GM12878 (cell line): ENCODE measurements at regions of chr13 and their contacts with region 1.

Region 1: DNA sequence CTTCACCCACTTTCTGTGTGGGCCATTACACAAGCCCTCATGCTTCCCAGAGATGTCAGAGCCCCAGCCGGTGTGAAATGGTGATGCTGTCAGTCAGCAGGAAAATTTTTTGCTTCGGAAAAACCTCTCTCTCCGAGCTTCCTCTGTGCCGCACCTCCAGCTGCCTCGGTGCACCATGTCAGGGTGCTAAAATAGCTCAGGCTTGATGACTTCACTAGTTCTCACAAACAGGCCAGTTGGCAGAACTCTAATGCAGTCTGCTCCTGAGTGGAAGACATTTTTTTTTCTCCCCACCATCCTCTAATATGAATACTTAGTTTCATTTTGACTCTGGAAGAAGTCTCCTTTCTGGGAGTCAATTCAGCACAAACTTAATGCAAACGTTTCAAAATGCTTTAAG is 71.3 kb downstream of the KLF12 start:
- DNase-seq: peak; percentile 52
- ATAC-seq: peak; percentile 90
- H3K4me3 ChIP-seq: peak overlapping the region; percentile 59
- H3K27ac ChIP-seq: peak overlapping the region; percentile 75
- H3K4me1 ChIP-seq: peaks cover 27% of the 10 kb centered on the region
- H3K27me3 ChIP-seq: no peaks in the 10 kb centered on the region
- CTCF ChIP-seq: no peak
- EP300 ChIP-seq: no peak
- POLR2A ChIP-seq: no peak
- RAD21 ChIP-seq: peak; percentile 13; the same call in 1 of the 2 replicates

Region 2: GRCh38 chr13:74040200-74040599 is 22.7 kb before region 1 on chr13:
- CTCF ChIA-PET with region 1: interaction called, 4 read pairs
- POLR2A ChIA-PET with region 1: no interaction called
- RAD21 ChIA-PET with region 1: interaction called, 5 read pairs
- SMC1A ChIA-PET with region 1: interaction called, 10 read pairs
- in situ Hi-C with region 1: no loop called
- intact Hi-C with region 1: no loop called
- DNase-seq: no peak
- ATAC-seq: peak; percentile 100
- H3K4me3 ChIP-seq: no peak overlapping the region
- H3K27ac ChIP-seq: no peak overlapping the region
- H3K4me1 ChIP-seq: no peaks in the 10 kb centered on the region; the same call in 1 of the 2 replicates
- H3K27me3 ChIP-seq: no peaks in the 10 kb centered on the region
- CTCF ChIP-seq: peak; percentile 82 to 88 (median 87)
- EP300 ChIP-seq: no peak
- POLR2A ChIP-seq: no peak
- RAD21 ChIP-seq: peak; percentile 75

Region 3: GRCh38 chr13:74074723-74075122 is 11.8 kb after region 1 on chr13:
- CTCF ChIA-PET with region 1: interaction called, 3 read pairs
- POLR2A ChIA-PET with region 1: interaction called, 4 read pairs
- RAD21 ChIA-PET with region 1: no interaction called
- SMC1A ChIA-PET with region 1: interaction called, 13 read pairs
- in situ Hi-C with region 1: no loop called
- intact Hi-C with region 1: no loop called
- DNase-seq: no peak
- ATAC-seq: no peak
- H3K4me3 ChIP-seq: no peak overlapping the region
- H3K27ac ChIP-seq: no peak overlapping the region
- H3K4me1 ChIP-seq: peaks cover 5% of the 10 kb centered on the region
- H3K27me3 ChIP-seq: no peaks in the 10 kb centered on the region
- CTCF ChIP-seq: no peak
- EP300 ChIP-seq: no peak
- POLR2A ChIP-seq: no peak
- RAD21 ChIP-seq: no peak

Region 4: DNA sequence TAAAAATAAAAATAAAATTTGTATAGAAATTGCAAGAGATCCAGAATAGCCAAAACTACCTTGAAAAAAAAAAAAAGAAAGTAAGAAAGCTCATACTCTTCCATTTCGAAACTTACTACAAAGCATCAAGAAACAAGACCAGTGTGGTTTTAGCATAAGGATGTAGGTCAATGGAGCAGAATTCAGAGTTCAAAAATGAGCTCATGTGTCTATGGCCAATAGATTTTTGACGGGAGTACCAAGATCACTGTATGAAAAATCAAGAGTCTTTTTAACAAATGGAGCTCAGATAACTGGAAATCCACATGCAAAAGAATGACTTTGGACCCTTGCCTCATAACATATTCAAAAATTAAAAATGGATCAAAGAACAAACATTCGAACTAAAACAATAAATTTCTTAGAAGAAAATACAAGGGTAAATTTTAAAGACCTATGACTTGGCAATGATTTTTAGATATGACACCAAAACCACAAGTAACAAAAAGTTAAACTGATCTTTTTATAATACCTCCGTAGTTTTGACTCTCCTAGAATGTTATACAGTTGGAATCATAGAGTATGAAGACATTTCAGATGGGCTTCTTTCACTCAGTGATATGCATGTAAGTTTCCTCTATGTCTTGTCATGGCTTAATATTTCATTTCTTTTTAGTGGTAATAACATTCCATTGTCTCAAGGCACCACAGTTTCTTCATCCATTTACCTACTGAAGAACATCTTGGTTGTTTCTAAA is 28.1 kb after region 1 on chr13:
- CTCF ChIA-PET with region 1: no interaction called
- POLR2A ChIA-PET with region 1: no interaction called
- RAD21 ChIA-PET with region 1: no interaction called
- SMC1A ChIA-PET with region 1: interaction called, 3 read pairs
- in situ Hi-C with region 1: no loop called
- intact Hi-C with region 1: loop called (anchors 2 kb)
- DNase-seq: no peak
- ATAC-seq: no peak
- H3K4me3 ChIP-seq: no peak overlapping the region
- H3K27ac ChIP-seq: no peak overlapping the region
- H3K4me1 ChIP-seq: no peaks in the 10 kb centered on the region
- H3K27me3 ChIP-seq: no peaks in the 10 kb centered on the region
- CTCF ChIP-seq: no peak
- EP300 ChIP-seq: no peak
- POLR2A ChIP-seq: no peak
- RAD21 ChIP-seq: no peak

Region 5: GRCh38 chr13:74133657-74134201 is 70.8 kb after region 1 on chr13:
- CTCF ChIA-PET with region 1: interaction called, 3 read pairs
- POLR2A ChIA-PET with region 1: interaction called, 4 read pairs
- RAD21 ChIA-PET with region 1: interaction called, 12 read pairs
- SMC1A ChIA-PET with region 1: interaction called, 21 read pairs
- in situ Hi-C with region 1: no loop called
- intact Hi-C with region 1: loop called (anchors 2 kb)
- DNase-seq: peak; percentile 64
- ATAC-seq: peak; percentile 70
- H3K4me3 ChIP-seq: peak overlapping the region; percentile 82
- H3K27ac ChIP-seq: peak overlapping the region; percentile 45
- H3K4me1 ChIP-seq: peaks cover 5% of the 10 kb centered on the region; the same call in 1 of the 2 replicates
- H3K27me3 ChIP-seq: no peaks in the 10 kb centered on the region
- CTCF ChIP-seq: no peak
- EP300 ChIP-seq: peak in 1 of 2 experiments; percentile 25; a peak in 1 of 4 replicates
- POLR2A ChIP-seq: no peak; the same call in none of the 2 replicates
- RAD21 ChIP-seq: 0 out of 2 replicates have a peak, but pooled peaks have one; percentile 1

Region 6: GRCh38 chr13:74883834-74884233 is 820.9 kb after region 1 on chr13:
- CTCF ChIA-PET with region 1: no interaction called
- POLR2A ChIA-PET with region 1: no interaction called
- RAD21 ChIA-PET with region 1: no interaction called
- SMC1A ChIA-PET with region 1: no interaction called
- in situ Hi-C with region 1: no loop called
- intact Hi-C with region 1: no loop called
- DNase-seq: no peak
- ATAC-seq: no peak
- H3K4me3 ChIP-seq: no peak overlapping the region
- H3K27ac ChIP-seq: no peak overlapping the region
- H3K4me1 ChIP-seq: no peaks in the 10 kb centered on the region
- H3K27me3 ChIP-seq: no peaks in the 10 kb centered on the region
- CTCF ChIP-seq: no peak
- EP300 ChIP-seq: no peak
- POLR2A ChIP-seq: no peak
- RAD21 ChIP-seq: no peak